OCI-LY7 (cell line): ENCODE measurements at regions of chr9 and their contacts with region 1.

Region 1: GRCh38 chr9:104927912-104928740 is at the start of gene ABCA1:
- DNase-seq: peak; percentile 92
- H3K4me3 ChIP-seq: peak within 1 kb of the TSS; percentile 86
- H3K27ac ChIP-seq: peak within 1 kb of the TSS; percentile 98
- H3K4me1 ChIP-seq: peaks cover 35% of the 10 kb centered on the region
- CTCF ChIP-seq: no peak
- total RNA-seq, gene ABCA1: 8.0 and 10.1 TPM in 2 replicates

Region 2: DNA sequence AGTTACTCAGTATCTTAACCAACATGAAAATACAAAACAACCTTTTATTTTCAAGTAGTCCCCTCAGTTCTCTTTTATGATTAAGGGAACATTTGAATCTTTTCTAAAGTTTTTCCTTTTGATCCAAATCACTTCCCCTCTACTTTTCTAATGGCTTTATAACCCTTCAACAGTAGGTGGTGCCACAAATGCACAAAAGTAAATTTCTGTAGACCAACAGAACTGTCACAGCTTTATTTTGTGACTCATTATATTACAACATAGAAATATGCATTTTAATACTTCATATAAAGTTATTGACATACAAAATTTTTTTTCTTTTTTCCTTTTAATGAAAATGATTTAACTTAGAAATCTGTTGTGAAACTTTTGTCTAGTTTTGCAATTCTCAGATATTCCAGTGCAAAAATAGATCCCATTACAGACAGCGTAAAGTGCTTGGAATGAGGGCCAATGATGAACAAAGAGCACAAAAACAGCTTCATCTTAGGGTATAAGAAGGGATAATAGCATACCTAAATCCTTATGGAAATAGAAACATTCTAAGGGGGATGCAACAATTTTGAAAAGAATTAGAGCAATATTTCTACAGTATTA is 147.2 kb before region 1 on chr9:
- CTCF ChIA-PET with region 1: no interaction called
- POLR2A ChIA-PET with region 1: interaction called, 6 read pairs
- intact Hi-C with region 1: loop called (anchors 2 kb)
- DNase-seq: peak; percentile 54
- H3K4me3 ChIP-seq: no peak overlapping the region
- H3K27ac ChIP-seq: no peak overlapping the region
- H3K4me1 ChIP-seq: peaks cover 24% of the 10 kb centered on the region
- CTCF ChIP-seq: peak; percentile 90

Region 3: GRCh38 chr9:104868687-104869404 is 59.3 kb before region 1 on chr9:
- CTCF ChIA-PET with region 1: interaction called, 18 read pairs
- POLR2A ChIA-PET with region 1: interaction called, 36 read pairs
- intact Hi-C with region 1: no loop called
- DNase-seq: peak; percentile 73
- H3K4me3 ChIP-seq: peak overlapping the region; percentile 7
- H3K27ac ChIP-seq: peak overlapping the region; percentile 63
- H3K4me1 ChIP-seq: peaks cover 35% of the 10 kb centered on the region
- CTCF ChIP-seq: no peak

Region 4: GRCh38 chr9:104968025-104968982 is 40.2 kb after region 1 on chr9:
- CTCF ChIA-PET with region 1: no interaction called
- POLR2A ChIA-PET with region 1: interaction called, 15 read pairs
- intact Hi-C with region 1: loop called (anchors 1 kb)
- DNase-seq: peak; percentile 90
- H3K4me3 ChIP-seq: peak overlapping the region; percentile 76
- H3K27ac ChIP-seq: no peak overlapping the region
- H3K4me1 ChIP-seq: peaks cover 6% of the 10 kb centered on the region
- CTCF ChIP-seq: no peak

Region 5: GRCh38 chr9:105030285-105030684 is 102.2 kb after region 1 on chr9:
- CTCF ChIA-PET with region 1: no interaction called
- POLR2A ChIA-PET with region 1: no interaction called
- intact Hi-C with region 1: loop called (anchors 5 kb)
- DNase-seq: no peak
- H3K4me3 ChIP-seq: no peak overlapping the region
- H3K27ac ChIP-seq: no peak overlapping the region
- H3K4me1 ChIP-seq: no peaks in the 10 kb centered on the region
- CTCF ChIP-seq: no peak

Region 6: GRCh38 chr9:105244003-105244733 is 316.0 kb after region 1 on chr9 and contains the start of gene SLC44A1:
- CTCF ChIA-PET with region 1: no interaction called
- POLR2A ChIA-PET with region 1: interaction called, 3 read pairs
- intact Hi-C with region 1: loop called (anchors 2 kb)
- DNase-seq: peak; percentile 94
- H3K4me3 ChIP-seq: peak within 1 kb of the TSS; percentile 93
- H3K27ac ChIP-seq: peak within 1 kb of the TSS; percentile 62
- H3K4me1 ChIP-seq: peaks cover 44% of the 10 kb centered on the region
- CTCF ChIP-seq: no peak
- total RNA-seq, gene SLC44A1: 26.6 and 27.6 TPM in 2 replicates